CD14-positive monocyte (primary cell): ENCODE measurements at regions of chr12 and their contacts with region 1.

Region 1: GRCh38 chr12:111685744-111686517 is at the starts of genes ACAD10 and BRAP:
- DNase-seq: peak; percentile 94 to 97 (median 94)
- H3K4me3 ChIP-seq: peak within 1 kb of the TSS; percentile 80 to 95 (median 87)
- H3K4me3 Mint-ChIP-seq: peak within 1 kb of the TSS; percentile 97 to 99
- H3K27ac ChIP-seq: peak within 1 kb of the TSS; percentile 76 to 97
- H3K27ac Mint-ChIP-seq: peak within 1 kb of the TSS; percentile 92 to 97 (median 95)
- H3K4me1 ChIP-seq: peaks cover 18 to 31% of the 10 kb centered on the region in 2 donors
- H3K4me1 Mint-ChIP-seq: peaks cover 29% of the 10 kb centered on the region
- H3K27me3 ChIP-seq: no peaks in the 10 kb centered on the region
- H3K27me3 Mint-ChIP-seq: no peaks in the 10 kb centered on the region
- CTCF ChIP-seq: no peak
- polyA plus RNA-seq, gene ACAD10: 9.4 to 34.3 (median 10.1) TPM
- polyA plus RNA-seq, gene BRAP: 7.0 to 14.5 (median 10.2) TPM

Region 2: DNA sequence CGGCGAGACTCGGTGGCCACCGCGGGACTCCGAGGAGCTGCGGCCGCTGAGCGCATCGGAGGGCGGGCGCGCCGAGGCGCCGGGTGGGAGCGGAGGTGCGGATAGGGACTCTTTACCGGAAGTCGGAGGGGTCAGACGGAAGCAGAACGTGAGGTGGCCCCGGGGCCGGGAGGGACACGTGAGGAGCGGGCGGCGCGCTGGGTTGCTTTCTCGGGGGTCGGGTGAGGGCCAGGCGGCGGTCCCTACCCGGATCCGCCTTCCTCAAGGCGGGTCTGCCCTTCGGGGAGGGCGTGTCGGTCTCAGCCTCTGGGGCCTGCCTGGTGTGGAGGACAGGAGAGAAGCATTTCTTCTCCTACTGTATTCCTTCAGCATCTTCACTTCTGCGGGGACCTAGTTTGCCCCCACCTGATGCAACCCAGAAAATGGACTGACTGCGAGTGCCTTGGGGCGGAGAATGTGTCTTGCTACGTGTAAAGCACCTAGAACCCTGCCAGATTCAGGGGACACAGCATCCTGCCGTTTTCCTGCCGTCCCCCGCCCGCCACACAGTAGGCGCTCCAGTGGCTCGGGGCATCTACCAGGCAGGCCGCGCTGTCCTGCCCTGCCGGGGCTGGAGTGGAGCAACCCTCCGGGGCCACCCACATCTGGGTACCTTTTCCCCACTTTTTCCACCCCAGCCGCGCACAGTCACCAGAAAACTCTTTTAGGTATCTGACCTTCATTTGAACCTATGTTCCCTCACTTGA is 86.3 kb before region 1 on chr12:
- intact Hi-C with region 1: loop called in 1 of 2 experiments (anchors 5 kb)
- DNase-seq: peak; percentile 65 to 80 (median 68)
- H3K4me3 ChIP-seq: peak overlapping the region; percentile 67 to 98 (median 77)
- H3K4me3 Mint-ChIP-seq: peak overlapping the region; percentile 81 to 84
- H3K27ac ChIP-seq: peak overlapping the region; percentile 44 to 80
- H3K27ac Mint-ChIP-seq: peak overlapping the region in 6 of 7 donors; percentile 63 to 86 (median 76)
- H3K4me1 ChIP-seq: peaks cover 17 to 28% of the 10 kb centered on the region in 2 donors
- H3K4me1 Mint-ChIP-seq: peaks cover 31% of the 10 kb centered on the region
- H3K27me3 ChIP-seq: no peaks in the 10 kb centered on the region
- H3K27me3 Mint-ChIP-seq: peaks cover 0 to 3% (median 2%) of the 10 kb centered on the region in 3 donors
- CTCF ChIP-seq: no peak